ENCODE measurements at regions of chrX and their contacts with region 1.

Region 1: DNA sequence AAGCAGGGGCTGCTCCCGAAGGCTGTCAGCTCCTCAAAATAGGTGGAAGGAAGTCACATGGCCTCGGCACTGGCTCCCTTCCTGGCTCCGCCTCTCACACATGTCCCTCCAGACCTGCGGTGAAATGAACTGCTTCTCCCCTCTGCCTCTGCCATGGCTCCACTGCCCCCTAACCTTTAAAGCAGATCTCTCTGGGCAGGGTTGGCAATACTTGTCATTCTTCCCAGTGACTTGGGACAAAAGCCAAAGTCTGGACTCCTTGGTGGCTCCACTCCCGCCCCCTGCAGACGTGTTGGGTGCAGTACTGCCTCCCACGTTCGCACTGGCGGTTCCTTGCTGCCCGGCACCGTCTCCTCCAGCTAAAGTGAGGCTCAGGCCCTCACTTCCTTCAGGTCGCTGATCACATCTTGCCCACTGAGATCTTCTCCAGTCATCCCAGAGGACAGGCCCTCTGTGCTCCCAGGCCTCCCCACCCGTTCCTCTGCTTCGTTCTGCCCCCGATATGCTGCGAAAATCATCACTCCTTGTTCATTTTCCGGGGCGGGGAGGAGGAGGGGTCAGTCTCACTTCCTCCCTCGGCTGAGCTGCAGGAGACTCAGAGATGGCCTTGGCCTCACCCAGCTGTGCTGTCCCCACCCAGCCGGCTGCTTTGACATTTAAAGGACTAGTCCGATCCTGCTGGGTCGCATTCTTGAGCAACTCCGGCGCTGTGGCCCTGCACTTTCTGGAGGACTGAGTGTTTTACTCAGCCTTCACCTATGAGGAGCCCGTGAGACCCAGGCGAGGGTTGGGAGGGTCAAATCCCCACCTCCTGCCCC is 97.4 kb downstream of the PHKA2 start:
- DNase-seq: peak; percentile 84
- ATAC-seq: peak; percentile 80

Region 2: GRCh38 chrX:18425199-18426003 is 461.2 kb before region 1 on chrX and contains the start of gene CDKL5:
- intact Hi-C with region 1: loop called (anchors 2 kb)
- DNase-seq: peak; percentile 97
- ATAC-seq: peak; percentile 98
- total RNA-seq, gene CDKL5: 8.1 TPM

Region 3: DNA sequence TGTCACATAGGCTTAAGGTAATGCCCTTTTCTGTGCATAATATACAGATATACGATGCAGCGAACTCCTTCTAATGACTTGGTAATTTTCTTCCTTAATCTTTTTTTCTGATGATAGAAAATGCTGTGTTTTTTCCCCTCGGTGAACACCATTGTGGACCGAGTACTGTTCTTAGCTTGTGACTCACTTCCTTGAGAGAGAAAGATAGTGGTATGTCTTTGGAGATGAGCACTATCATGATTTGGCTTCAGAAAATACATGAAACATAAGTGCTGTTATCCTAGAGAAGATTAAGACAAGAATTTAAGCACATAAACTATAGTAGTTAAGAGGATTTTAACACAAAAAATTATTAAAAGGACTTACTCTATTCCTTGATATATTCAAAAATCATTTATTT is 278.6 kb before region 1 on chrX:
- intact Hi-C with region 1: loop called (anchors 10 kb)
- DNase-seq: no peak
- ATAC-seq: no peak

Region 4: GRCh38 chrX:18861511-18861910 is 25.0 kb before region 1 on chrX:
- intact Hi-C with region 1: no loop called
- DNase-seq: no peak
- ATAC-seq: no peak